Activated CD8-positive, alpha-beta T cell treated with anti-CD3 and anti-CD28 coated beads for 36 hours (primary cell): ENCODE measurements at regions of chr1 and their contacts with region 1.

Region 1: GRCh38 chr1:212062832-212063438 is 27.4 kb downstream of the DTL start:
- DNase-seq: no peak
- ATAC-seq: peak; percentile 53
- H3K4me3 Mint-ChIP-seq: no peak overlapping the region
- H3K27ac Mint-ChIP-seq: no peak overlapping the region
- H3K4me1 Mint-ChIP-seq: no peaks in the 10 kb centered on the region
- H3K27me3 Mint-ChIP-seq: no peaks in the 10 kb centered on the region
- CTCF ChIP-seq: peak; percentile 87

Region 2: DNA sequence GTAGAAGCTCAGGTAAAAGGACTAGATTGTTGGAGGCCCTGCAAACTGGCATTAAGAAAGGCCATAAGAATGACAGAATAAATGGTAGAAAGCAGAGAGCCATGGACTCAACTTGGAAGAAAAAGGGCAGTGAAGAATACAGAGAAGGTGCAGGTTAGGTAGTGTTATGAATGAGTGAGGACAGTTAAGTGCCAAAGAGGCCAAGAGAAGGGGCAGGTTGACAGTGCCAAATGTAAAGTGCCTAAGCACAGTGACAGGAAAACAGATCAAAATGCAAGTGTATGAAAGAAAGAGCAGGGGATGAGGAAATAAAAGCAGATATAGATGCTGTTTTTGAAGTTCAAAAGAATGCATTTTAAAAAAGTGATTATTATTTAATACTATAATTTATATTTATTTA is 71.2 kb before region 1 on chr1:
- CTCF ChIA-PET with region 1: no interaction called
- POLR2A ChIA-PET with region 1: no interaction called
- intact Hi-C with region 1: no loop called
- DNase-seq: no peak
- ATAC-seq: no peak
- H3K4me3 Mint-ChIP-seq: no peak overlapping the region
- H3K27ac Mint-ChIP-seq: no peak overlapping the region
- H3K4me1 Mint-ChIP-seq: peaks cover 6% of the 10 kb centered on the region
- H3K27me3 Mint-ChIP-seq: no peaks in the 10 kb centered on the region
- CTCF ChIP-seq: no peak

Region 3: DNA sequence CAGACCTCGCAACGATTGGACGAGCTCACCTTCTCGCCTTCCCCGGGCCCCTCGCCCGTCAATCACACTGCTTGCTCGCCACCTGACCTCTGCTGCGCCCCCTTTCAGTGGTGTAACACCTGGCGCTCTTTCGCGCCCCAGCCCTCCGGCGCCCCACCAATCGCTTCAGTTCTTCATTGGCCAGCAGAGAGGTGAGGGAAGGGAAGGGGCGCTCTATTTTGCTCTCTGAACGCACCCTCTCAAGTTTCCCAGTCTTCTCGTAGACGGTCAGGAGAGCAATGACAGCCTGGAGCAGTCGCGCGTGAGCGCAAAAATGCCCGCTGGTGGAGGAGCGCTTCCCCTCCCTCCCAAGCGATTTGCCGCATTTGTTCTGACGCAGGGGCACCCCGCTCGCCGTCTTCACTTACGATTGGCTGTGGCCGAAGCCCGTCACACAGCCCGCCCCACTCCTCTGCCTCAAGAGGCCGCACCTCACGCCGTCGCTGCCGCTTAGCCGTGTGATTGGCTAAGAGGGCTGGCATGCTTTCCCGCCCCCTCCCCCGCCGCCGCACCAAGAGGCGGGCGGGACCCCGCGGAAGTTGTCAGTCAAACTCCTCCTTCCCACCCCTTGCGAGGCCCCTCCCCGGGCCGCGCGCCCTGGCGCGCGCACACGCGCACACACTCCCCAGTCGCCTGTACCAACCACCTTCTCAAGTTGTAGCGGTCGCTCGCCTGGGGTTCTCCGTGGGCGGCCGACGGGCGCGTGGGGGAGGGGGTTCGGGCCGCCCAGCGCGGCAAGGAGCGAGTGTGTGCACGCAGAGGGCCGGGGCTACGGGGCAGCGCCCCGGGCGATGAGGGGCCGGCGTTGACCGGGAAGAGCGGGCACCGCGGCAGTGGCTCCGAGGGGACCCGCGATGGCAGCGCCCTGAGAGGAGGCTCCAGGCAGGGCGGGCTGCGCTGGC is 222.1 kb after region 1 on chr1 and contains the start of gene PPP2R5A:
- CTCF ChIA-PET with region 1: interaction called, 5 read pairs
- POLR2A ChIA-PET with region 1: interaction called, 4 read pairs
- intact Hi-C with region 1: loop called (anchors 5 kb)
- DNase-seq: peak; percentile 99
- ATAC-seq: peak; percentile 91
- H3K4me3 Mint-ChIP-seq: peak within 1 kb of the TSS; percentile 96
- H3K27ac Mint-ChIP-seq: peak within 1 kb of the TSS; percentile 97
- H3K4me1 Mint-ChIP-seq: peaks cover 27% of the 10 kb centered on the region
- H3K27me3 Mint-ChIP-seq: no peaks in the 10 kb centered on the region
- CTCF ChIP-seq: peak; percentile 38
- total RNA-seq, gene PPP2R5A: 35.2 to 36.5 TPM

Region 4: DNA sequence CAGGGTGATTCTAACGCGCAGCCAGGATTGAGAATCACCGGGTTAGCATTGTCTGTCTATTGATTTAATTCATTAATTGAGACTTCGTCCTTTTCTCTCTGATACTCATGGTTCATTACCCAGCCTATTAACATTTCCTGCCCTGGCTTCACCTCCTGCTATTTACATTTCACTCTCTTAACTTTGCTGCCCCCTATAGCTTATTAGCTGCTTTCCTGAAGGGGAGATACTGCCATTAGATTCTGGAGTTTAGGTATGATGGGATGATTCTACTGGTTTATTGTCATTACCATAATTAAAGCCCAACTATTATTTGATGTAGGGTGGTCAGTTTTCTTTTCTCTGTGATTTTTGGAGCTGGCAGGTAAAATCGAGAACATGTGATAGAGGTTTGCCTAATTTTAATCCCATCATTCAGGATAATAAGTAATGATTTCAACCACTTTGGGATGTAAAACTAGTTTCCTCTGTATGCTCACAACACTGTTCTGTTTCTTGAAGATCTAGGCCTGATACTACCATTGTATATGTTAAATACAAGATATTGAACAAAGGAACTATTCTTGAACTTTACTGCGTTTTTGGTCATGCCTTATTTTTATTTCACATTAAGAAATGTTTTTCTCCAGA is 228.7 kb after region 1 on chr1:
- CTCF ChIA-PET with region 1: interaction called, 13 read pairs
- POLR2A ChIA-PET with region 1: interaction called, 4 read pairs
- intact Hi-C with region 1: loop called (anchors 5 kb)
- DNase-seq: no peak
- ATAC-seq: peak; percentile 55
- H3K4me3 Mint-ChIP-seq: no peak overlapping the region
- H3K27ac Mint-ChIP-seq: peak overlapping the region; percentile 4
- H3K4me1 Mint-ChIP-seq: peaks cover 74% of the 10 kb centered on the region
- H3K27me3 Mint-ChIP-seq: no peaks in the 10 kb centered on the region
- CTCF ChIP-seq: peak; percentile 58